ENCODE measurements at regions of chr19 and their contacts with region 1.

Region 1: GRCh38 chr19:6021878-6022569 is 44.1 kb upstream of the RANBP3 start:
- DNase-seq: peak; percentile 85
- ATAC-seq: peak; percentile 94
- H3K4me3 ChIP-seq: peak overlapping the region in 1 of 3 experiments; percentile 57; a peak in 2 of 6 replicates
- H3K27ac ChIP-seq: no peak overlapping the region
- H3K4me1 ChIP-seq: peaks cover 52% of the 10 kb centered on the region
- H3K27me3 ChIP-seq: peaks cover 5 to 40% of the 10 kb centered on the region in 2 experiments
- CTCF ChIP-seq: peak; percentile 95
- EP300 ChIP-seq: no peak
- POLR2A ChIP-seq: no peak
- RAD21 ChIP-seq: peak; percentile 93

Region 2: GRCh38 chr19:5803752-5804515 is 218.1 kb before region 1 on chr19:
- CTCF ChIA-PET with region 1: interaction called, 7 read pairs
- POLR2A ChIA-PET with region 1: interaction called, 6 read pairs
- in situ Hi-C with region 1: loop called (anchors 5 kb)
- intact Hi-C with region 1: loop called (anchors 10 kb)
- DNase-seq: peak; percentile 83
- ATAC-seq: peak; percentile 88
- H3K4me3 ChIP-seq: peak overlapping the region; percentile 36 to 68 (median 42)
- H3K27ac ChIP-seq: no peak overlapping the region
- H3K4me1 ChIP-seq: peaks cover 67% of the 10 kb centered on the region
- H3K27me3 ChIP-seq: no peaks in the 10 kb centered on the region; a peak in 1 of 5 replicates
- CTCF ChIP-seq: peak; percentile 99
- EP300 ChIP-seq: peak; percentile 7 to 25; a peak in 1 of 4 replicates
- POLR2A ChIP-seq: peak in 1 of 2 experiments; percentile 42; a peak in 1 of 4 replicates
- RAD21 ChIP-seq: peak; percentile 100

Region 3: GRCh38 chr19:5987077-5987818 is 34.8 kb before region 1 on chr19:
- CTCF ChIA-PET with region 1: interaction called, 49 read pairs
- POLR2A ChIA-PET with region 1: interaction called, 5 read pairs
- in situ Hi-C with region 1: loop called (anchors 5 kb)
- intact Hi-C with region 1: loop called (anchors 1 kb)
- DNase-seq: peak; percentile 90
- ATAC-seq: peak; percentile 54
- H3K4me3 ChIP-seq: peak overlapping the region; percentile 20 to 65 (median 47); a peak in 5 of 6 replicates
- H3K27ac ChIP-seq: no peak overlapping the region
- H3K4me1 ChIP-seq: peaks cover 71% of the 10 kb centered on the region
- H3K27me3 ChIP-seq: peaks cover 0 to 11% of the 10 kb centered on the region in 2 experiments; a peak in 2 of 5 replicates
- CTCF ChIP-seq: peak; percentile 92
- EP300 ChIP-seq: peak in 1 of 2 experiments; percentile 63; a peak in 2 of 4 replicates
- POLR2A ChIP-seq: no peak
- RAD21 ChIP-seq: peak; percentile 81

Region 4: GRCh38 chr19:5997371-5997770 is 24.7 kb before region 1 on chr19:
- CTCF ChIA-PET with region 1: interaction called, 14 read pairs
- POLR2A ChIA-PET with region 1: interaction called, 8 read pairs
- in situ Hi-C with region 1: no loop called
- intact Hi-C with region 1: no loop called
- DNase-seq: no peak
- ATAC-seq: peak; percentile 26; the same call in 2 of the 3 replicates
- H3K4me3 ChIP-seq: no peak overlapping the region
- H3K27ac ChIP-seq: no peak overlapping the region
- H3K4me1 ChIP-seq: peaks cover 25% of the 10 kb centered on the region
- H3K27me3 ChIP-seq: peaks cover 0 to 11% of the 10 kb centered on the region in 2 experiments; a peak in 2 of 5 replicates
- CTCF ChIP-seq: peak; percentile 54
- EP300 ChIP-seq: no peak
- POLR2A ChIP-seq: no peak
- RAD21 ChIP-seq: peak; percentile 21; the same call in 1 of the 2 replicates

Region 5: DNA sequence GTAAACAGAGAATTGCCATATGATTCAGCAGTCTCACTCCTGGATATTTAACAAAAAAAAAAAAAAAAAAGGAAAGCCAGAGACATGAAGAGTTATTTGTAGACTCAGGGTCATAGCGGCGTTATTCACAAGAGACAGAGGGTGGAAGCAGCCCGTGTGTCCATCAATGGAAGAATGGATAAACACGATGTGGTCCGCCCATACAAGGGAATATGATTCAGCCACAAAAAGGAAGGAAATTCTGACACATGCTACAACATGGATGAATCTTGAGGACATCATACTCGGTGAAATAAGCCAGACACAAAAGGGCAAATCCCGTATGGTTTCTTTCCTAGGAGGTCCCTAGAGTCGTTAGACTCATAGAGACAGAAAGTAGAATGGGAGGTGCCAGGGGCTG is 128.3 kb after region 1 on chr19:
- CTCF ChIA-PET with region 1: no interaction called
- POLR2A ChIA-PET with region 1: no interaction called
- in situ Hi-C with region 1: no loop called
- intact Hi-C with region 1: no loop called
- DNase-seq: no peak
- ATAC-seq: no peak
- H3K4me3 ChIP-seq: no peak overlapping the region
- H3K27ac ChIP-seq: no peak overlapping the region
- H3K4me1 ChIP-seq: no peaks in the 10 kb centered on the region
- H3K27me3 ChIP-seq: no peaks in the 10 kb centered on the region
- CTCF ChIP-seq: no peak
- EP300 ChIP-seq: no peak
- POLR2A ChIP-seq: no peak
- RAD21 ChIP-seq: no peak